Activated T-helper 2 cell treated with anti-CD3 and anti-CD28 coated beads, Interferon-gamma antibody, Interleukin-2, Interleukin-4, amounts not matched to agents 10 μg/mL and 5 μg/mL and 100 μg/mL, durations not matched to agents 14 hours and 24 hours and 36 hours (primary cell): ENCODE measurements at regions of chrX and their contacts with region 1.

Region 1: GRCh38 chrX:13013363-13014110 is 30.9 kb downstream of the FAM9C start:
- DNase-seq: no peak
- H3K4me3 Mint-ChIP-seq: peak overlapping the region; percentile 23
- H3K27ac Mint-ChIP-seq: peak overlapping the region; percentile 87
- H3K4me1 Mint-ChIP-seq: peaks cover 49% of the 10 kb centered on the region
- H3K27me3 Mint-ChIP-seq: no peaks in the 10 kb centered on the region

Region 2: DNA sequence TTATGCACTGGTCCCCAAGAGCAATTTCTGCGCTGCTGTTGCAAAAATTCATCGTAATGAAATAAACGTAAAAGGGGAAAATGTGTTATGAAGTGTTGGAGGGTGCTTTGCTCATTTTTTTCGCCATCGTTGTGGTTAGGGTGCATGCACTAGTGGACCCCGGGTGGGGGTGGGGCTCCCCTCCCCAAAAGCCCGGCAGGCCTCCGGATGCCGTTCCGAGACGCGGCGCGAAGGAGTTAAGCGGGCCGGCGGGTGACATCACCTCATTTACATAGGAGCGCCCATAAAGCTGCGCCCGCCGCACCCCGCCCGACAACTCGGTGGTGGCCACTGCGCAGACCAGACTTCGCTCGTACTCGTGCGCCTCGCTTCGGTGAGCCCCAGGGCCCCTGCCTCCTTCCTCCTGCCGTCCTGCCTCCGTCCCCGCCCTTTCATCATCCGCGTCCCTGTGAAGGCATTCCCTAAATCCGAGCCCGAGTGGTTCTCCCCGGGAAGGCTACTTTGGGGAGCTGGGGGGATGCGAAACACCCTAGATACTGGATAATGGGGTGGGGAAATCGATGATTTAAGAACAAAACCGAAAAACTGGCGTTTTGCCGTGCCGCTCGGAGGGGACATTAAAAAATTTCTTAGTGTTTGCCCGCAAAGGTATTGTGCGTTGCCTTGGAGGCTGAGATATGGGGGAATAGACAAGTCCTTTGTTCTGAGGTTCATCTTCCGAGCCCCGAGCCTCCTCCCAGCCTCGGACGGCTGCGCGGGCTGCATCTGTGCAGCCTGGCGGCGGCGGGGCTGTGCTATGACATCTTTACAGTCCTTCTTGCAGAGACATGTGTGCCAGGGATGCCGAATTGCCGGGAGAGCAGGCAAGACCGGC is 38.5 kb before region 1 on chrX and contains the start of gene TMSB4X:
- intact Hi-C with region 1: loop called (anchors 5 kb)
- DNase-seq: peak; percentile 84
- H3K4me3 Mint-ChIP-seq: peak within 1 kb of the TSS; percentile 96
- H3K27ac Mint-ChIP-seq: peak within 1 kb of the TSS; percentile 95
- H3K4me1 Mint-ChIP-seq: peaks cover 35% of the 10 kb centered on the region
- H3K27me3 Mint-ChIP-seq: no peaks in the 10 kb centered on the region
- total RNA-seq, gene TMSB4X: 7,759 and 7,983 TPM in 2 replicates

Region 3: DNA sequence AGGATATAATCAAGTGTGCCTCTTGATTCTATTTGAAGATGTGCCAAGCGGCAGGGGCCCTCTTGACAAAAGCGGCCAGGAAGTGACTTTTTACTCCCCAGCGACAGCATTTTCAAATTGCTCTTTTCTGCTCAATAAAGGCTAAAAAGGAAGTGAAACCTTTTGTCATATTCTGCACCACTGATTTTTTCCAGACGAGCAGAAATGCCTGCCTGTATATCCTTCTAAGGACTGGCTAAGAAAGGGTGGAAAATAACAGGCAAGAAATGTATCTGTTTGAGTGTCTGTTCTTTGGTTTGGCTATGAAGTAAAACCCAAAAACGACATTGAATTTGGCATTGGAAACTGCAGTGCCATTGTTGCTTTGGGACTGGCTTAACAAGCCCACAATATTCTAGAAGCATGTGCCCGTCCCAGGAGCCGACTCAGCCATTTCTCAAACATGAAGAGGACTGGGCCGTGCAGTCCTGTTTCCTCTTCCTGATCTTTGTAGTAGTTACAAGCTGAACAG is 13.2 kb before region 1 on chrX:
- intact Hi-C with region 1: loop called (anchors 1 kb)
- DNase-seq: no peak
- H3K4me3 Mint-ChIP-seq: peak overlapping the region; percentile 66
- H3K27ac Mint-ChIP-seq: peak overlapping the region; percentile 98
- H3K4me1 Mint-ChIP-seq: peaks cover 62% of the 10 kb centered on the region
- H3K27me3 Mint-ChIP-seq: no peaks in the 10 kb centered on the region

Region 4: DNA sequence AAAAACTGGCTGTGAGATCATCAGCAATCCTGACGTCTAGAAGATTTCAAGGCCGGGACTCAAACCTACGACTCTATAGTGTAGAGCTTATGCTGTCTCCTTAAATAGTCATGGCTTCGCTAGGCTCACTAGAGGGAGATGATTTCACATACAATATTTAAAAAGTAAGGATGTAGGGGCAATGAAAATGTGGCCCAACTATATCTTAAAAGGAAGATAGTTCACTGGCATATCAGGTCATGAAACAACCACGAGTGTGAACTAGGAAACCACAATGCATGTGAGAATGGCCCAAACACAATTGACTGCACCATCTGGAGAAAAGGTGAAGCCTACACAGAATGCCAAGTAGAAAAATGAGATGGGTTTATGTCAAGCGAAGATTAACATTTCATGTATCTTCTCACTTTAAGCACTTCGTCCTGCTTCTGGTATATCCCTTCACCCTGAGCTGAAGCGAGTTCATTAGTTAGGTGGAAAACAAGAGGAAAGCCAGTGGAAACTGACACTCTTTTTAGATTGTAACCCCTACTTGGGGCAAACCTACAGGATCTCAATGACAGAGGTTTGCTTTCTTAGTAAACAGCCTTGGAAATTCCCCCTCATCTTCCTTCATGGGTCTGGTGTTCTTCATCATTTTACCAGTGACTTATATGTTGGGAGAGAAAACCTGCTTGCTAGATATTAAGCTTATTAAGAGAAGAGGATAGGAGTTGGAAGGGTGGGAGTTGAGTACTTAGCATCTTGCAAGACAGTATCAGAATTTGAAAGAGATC is 13.5 kb after region 1 on chrX:
- intact Hi-C with region 1: loop called (anchors 1 kb)
- DNase-seq: no peak
- H3K4me3 Mint-ChIP-seq: no peak overlapping the region
- H3K27ac Mint-ChIP-seq: peak overlapping the region; percentile 72
- H3K4me1 Mint-ChIP-seq: peaks cover 67% of the 10 kb centered on the region
- H3K27me3 Mint-ChIP-seq: no peaks in the 10 kb centered on the region

Region 5: GRCh38 chrX:13051529-13052172 is 38.1 kb after region 1 on chrX:
- intact Hi-C with region 1: loop called (anchors 1 kb)
- DNase-seq: no peak
- H3K4me3 Mint-ChIP-seq: no peak overlapping the region
- H3K27ac Mint-ChIP-seq: peak overlapping the region; percentile 85
- H3K4me1 Mint-ChIP-seq: peaks cover 34% of the 10 kb centered on the region
- H3K27me3 Mint-ChIP-seq: no peaks in the 10 kb centered on the region